GM12878 (cell line): ENCODE measurements at regions of chr13 and their contacts with region 1.

Region 1: GRCh38 chr13:80477661-80478443 is 136.9 kb upstream of the SPRY2 start:
- DNase-seq: no peak
- ATAC-seq: peak; percentile 80
- H3K4me3 ChIP-seq: no peak overlapping the region
- H3K27ac ChIP-seq: no peak overlapping the region
- H3K4me1 ChIP-seq: no peaks in the 10 kb centered on the region
- H3K27me3 ChIP-seq: no peaks in the 10 kb centered on the region
- CTCF ChIP-seq: no peak
- EP300 ChIP-seq: peak; percentile 93 to 96
- POLR2A ChIP-seq: no peak
- RAD21 ChIP-seq: no peak

Region 2: GRCh38 chr13:80348314-80348713 is 129.5 kb before region 1 on chr13:
- CTCF ChIA-PET with region 1: interaction called, 12 read pairs
- POLR2A ChIA-PET with region 1: interaction called, 3 read pairs
- RAD21 ChIA-PET with region 1: interaction called, 26 read pairs
- SMC1A ChIA-PET with region 1: interaction called, 5 read pairs
- in situ Hi-C with region 1: no loop called
- intact Hi-C with region 1: no loop called
- DNase-seq: no peak
- ATAC-seq: no peak; the same call in 2 of the 3 replicates
- H3K4me3 ChIP-seq: no peak overlapping the region
- H3K27ac ChIP-seq: no peak overlapping the region
- H3K4me1 ChIP-seq: no peaks in the 10 kb centered on the region
- H3K27me3 ChIP-seq: no peaks in the 10 kb centered on the region
- CTCF ChIP-seq: no peak
- EP300 ChIP-seq: no peak
- POLR2A ChIP-seq: no peak
- RAD21 ChIP-seq: no peak